ENCODE measurements at regions of chr7 and their contacts with region 1.

Region 1: DNA sequence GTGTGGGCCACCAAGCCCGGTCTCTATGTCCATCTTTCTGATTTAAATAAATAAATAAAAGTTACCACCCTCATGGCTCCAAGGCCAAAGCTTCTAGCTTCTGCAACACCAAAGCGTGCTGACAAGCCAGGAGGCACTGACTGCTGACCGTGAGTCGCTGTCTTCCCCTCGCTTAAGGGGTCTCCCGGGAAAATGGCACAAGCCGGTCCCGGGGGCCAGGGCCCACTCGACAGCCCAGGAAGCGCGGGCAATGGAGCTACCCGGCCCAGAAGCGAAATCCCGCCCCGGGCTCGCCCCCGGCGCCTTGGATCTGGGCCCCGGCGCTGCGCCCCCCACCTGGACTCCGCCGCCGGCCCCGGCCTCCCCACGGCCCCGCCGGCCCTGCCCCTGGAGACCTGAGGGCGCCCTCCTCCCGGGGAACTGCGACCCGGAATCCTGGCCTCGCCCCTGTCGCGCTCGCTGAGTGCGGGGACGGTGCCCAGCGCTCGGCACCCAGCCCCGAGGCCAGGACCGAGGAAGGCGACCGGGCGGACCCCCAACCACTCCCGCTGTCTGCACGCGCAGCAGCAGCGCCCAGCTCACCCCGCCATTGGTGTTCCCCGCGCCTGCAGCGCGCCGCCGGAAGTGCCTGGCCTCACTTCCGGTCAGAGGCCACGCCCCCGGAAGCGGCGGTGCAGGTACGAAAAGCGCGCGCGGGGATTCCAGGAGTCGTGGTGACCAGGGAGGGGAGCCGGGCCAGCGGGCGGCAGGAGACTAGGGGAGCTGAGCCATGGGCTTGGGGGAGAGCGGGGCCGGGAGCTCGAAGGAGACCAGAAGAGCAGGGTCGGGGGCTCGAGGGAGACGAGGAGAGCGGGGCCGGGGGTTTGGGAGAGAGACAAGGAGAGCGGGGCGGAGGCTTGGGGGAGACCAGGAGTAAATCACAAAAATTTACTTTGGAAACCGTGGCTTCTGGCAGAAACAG is at the starts of genes MRM2 and NUDT1:
- DNase-seq: peak; percentile 73 to 78
- ATAC-seq: peak; percentile 84 to 86 (median 84)
- H3K4me3 ChIP-seq: peak within 1 kb of the TSS; percentile 96
- H3K4me3 Mint-ChIP-seq: peak within 1 kb of the TSS; percentile 95
- H3K27ac ChIP-seq: peak within 1 kb of the TSS; percentile 68
- H3K27ac Mint-ChIP-seq: peak within 1 kb of the TSS; percentile 74 to 97
- H3K4me1 ChIP-seq: peaks cover 59% of the 10 kb centered on the region
- H3K4me1 Mint-ChIP-seq: peaks cover 4 to 28% of the 10 kb centered on the region in 2 donors
- H3K27me3 ChIP-seq: no peaks in the 10 kb centered on the region
- H3K27me3 Mint-ChIP-seq: no peaks in the 10 kb centered on the region
- CTCF ChIP-seq: no peak
- total RNA-seq, gene MRM2: 7.9 to 12.0 (median 10.0) TPM
- total RNA-seq, gene NUDT1: 17.9 to 19.2 (median 18.2) TPM

Region 2: GRCh38 chr7:1569833-1570633 is 671.8 kb before region 1 on chr7 and contains the start of gene PSMG3:
- intact Hi-C with region 1: loop called (anchors 10 kb)
- DNase-seq: peak; percentile 89 to 93
- ATAC-seq: peak; percentile 92 to 96 (median 92)
- H3K4me3 ChIP-seq: peak within 1 kb of the TSS; percentile 94
- H3K4me3 Mint-ChIP-seq: peak within 1 kb of the TSS; percentile 90
- H3K27ac ChIP-seq: peak within 1 kb of the TSS; percentile 91
- H3K27ac Mint-ChIP-seq: peak within 1 kb of the TSS; percentile 85 to 88
- H3K4me1 ChIP-seq: peaks cover 25% of the 10 kb centered on the region
- H3K4me1 Mint-ChIP-seq: peaks cover 17 to 20% of the 10 kb centered on the region in 2 donors
- H3K27me3 ChIP-seq: no peaks in the 10 kb centered on the region
- H3K27me3 Mint-ChIP-seq: no peaks in the 10 kb centered on the region
- CTCF ChIP-seq: peak; percentile 12
- total RNA-seq, gene PSMG3: 19.0 to 21.4 (median 20.5) TPM

Region 3: GRCh38 chr7:2465928-2466327 is 224.1 kb after region 1 on chr7:
- intact Hi-C with region 1: loop called (anchors 10 kb)
- DNase-seq: no peak
- ATAC-seq: no peak
- H3K4me3 ChIP-seq: no peak overlapping the region
- H3K4me3 Mint-ChIP-seq: no peak overlapping the region
- H3K27ac ChIP-seq: no peak overlapping the region
- H3K27ac Mint-ChIP-seq: no peak overlapping the region
- H3K4me1 ChIP-seq: peaks cover 8% of the 10 kb centered on the region
- H3K4me1 Mint-ChIP-seq: peaks cover 5 to 6% of the 10 kb centered on the region in 2 donors
- H3K27me3 ChIP-seq: no peaks in the 10 kb centered on the region
- H3K27me3 Mint-ChIP-seq: peaks cover 7 to 9% of the 10 kb centered on the region in 2 donors
- CTCF ChIP-seq: no peak

Region 4: GRCh38 chr7:2495418-2496299 is 253.8 kb after region 1 on chr7:
- intact Hi-C with region 1: no loop called
- DNase-seq: no peak
- ATAC-seq: no peak
- H3K4me3 ChIP-seq: no peak overlapping the region
- H3K4me3 Mint-ChIP-seq: no peak overlapping the region
- H3K27ac ChIP-seq: no peak overlapping the region
- H3K27ac Mint-ChIP-seq: no peak overlapping the region
- H3K4me1 ChIP-seq: peaks cover 5% of the 10 kb centered on the region
- H3K4me1 Mint-ChIP-seq: peaks cover 0 to 4% of the 10 kb centered on the region in 2 donors
- H3K27me3 ChIP-seq: peaks cover 7% of the 10 kb centered on the region
- H3K27me3 Mint-ChIP-seq: peaks cover 0 to 15% of the 10 kb centered on the region in 2 donors
- CTCF ChIP-seq: no peak

Measured in natural killer cell (primary cell).